Activated CD4-positive, alpha-beta T cell treated with anti-CD3 and anti-CD28 coated beads for 36 hours (primary cell): ENCODE measurements at regions of chr13 and their contacts with region 1.

Region 1: GRCh38 chr13:40485611-40486517 is 180.6 kb downstream of the FOXO1 start:
- DNase-seq: peak; percentile 80
- ATAC-seq: peak; percentile 94
- H3K4me3 Mint-ChIP-seq: peak overlapping the region; percentile 20
- H3K27ac Mint-ChIP-seq: peak overlapping the region; percentile 93
- H3K4me1 Mint-ChIP-seq: peaks cover 86% of the 10 kb centered on the region
- H3K27me3 Mint-ChIP-seq: no peaks in the 10 kb centered on the region

Region 2: GRCh38 chr13:40422588-40423235 is 63.2 kb before region 1 on chr13:
- CTCF ChIA-PET with region 1: no interaction called
- POLR2A ChIA-PET with region 1: no interaction called
- intact Hi-C with region 1: loop called in 1 of 2 experiments (anchors 5 kb)
- DNase-seq: peak; percentile 41
- ATAC-seq: peak; percentile 75
- H3K4me3 Mint-ChIP-seq: no peak overlapping the region
- H3K27ac Mint-ChIP-seq: no peak overlapping the region
- H3K4me1 Mint-ChIP-seq: peaks cover 32% of the 10 kb centered on the region
- H3K27me3 Mint-ChIP-seq: no peaks in the 10 kb centered on the region

Region 3: DNA sequence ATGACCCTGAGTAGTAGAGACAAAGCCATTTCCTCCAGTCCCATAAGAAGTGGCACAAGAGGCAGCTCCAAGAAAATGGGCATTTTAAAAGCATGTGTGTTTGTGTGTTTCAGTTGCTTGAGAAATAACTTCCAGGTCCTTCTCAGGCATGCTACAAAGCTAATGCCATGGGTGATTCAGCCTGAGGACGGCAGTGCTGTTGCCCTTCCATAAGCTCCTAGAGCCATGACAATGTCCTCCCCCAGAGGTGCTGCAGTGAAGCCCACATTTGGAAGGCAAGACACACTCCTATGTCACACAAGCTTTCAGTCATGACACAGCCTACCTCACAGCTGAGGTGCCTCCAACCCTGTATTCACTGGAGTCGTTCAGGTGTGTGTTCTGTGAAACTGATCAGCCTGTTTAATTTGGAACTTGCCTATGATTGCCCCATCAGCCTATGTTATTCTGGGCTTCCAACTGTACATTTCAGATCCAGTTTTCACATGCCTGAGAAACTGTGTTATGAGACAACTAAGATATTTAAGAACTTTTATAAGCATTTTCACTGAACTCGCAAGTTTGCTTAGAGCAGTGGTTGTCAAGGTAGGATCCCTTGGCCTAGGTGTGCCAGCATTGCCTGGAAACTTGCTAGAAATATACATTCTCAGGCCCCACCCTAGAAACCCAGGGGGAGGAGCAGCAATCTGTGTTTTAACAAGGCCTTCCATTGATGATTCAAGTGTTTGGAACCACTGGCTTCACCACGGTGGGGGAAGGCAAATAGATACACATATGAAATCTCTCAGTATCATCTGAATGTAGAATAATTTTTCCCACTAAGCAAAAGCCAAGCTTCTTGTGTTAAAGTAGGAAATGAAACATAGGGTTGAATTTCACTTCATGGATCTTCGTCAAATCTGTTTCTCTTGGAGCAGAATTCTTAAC is 32.9 kb before region 1 on chr13:
- CTCF ChIA-PET with region 1: no interaction called
- POLR2A ChIA-PET with region 1: no interaction called
- intact Hi-C with region 1: no loop called
- DNase-seq: peak; percentile 16
- ATAC-seq: no peak
- H3K4me3 Mint-ChIP-seq: no peak overlapping the region
- H3K27ac Mint-ChIP-seq: no peak overlapping the region
- H3K4me1 Mint-ChIP-seq: peaks cover 22% of the 10 kb centered on the region
- H3K27me3 Mint-ChIP-seq: no peaks in the 10 kb centered on the region

Region 4: DNA sequence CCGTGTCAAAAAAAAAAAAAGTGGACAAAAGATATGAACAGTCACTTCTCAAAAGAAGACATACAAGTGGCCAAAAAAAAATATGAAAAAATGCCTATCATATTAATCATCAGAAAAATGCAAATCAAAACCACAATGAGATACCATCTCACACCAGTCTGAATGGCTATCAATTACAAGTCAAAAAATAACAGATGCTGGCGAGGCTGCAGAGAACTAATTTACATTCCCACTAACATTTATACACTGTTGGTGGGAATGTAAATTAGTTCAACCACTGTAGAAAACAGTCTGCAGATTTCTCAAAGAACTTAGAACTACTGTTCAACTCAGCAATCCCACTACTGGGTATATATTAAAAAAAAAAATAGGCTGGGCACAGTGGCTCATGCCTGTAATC is 207.1 kb after region 1 on chr13:
- CTCF ChIA-PET with region 1: no interaction called
- POLR2A ChIA-PET with region 1: no interaction called
- intact Hi-C with region 1: no loop called
- DNase-seq: no peak
- ATAC-seq: no peak
- H3K4me3 Mint-ChIP-seq: no peak overlapping the region
- H3K27ac Mint-ChIP-seq: no peak overlapping the region
- H3K4me1 Mint-ChIP-seq: no peaks in the 10 kb centered on the region
- H3K27me3 Mint-ChIP-seq: no peaks in the 10 kb centered on the region